ENCODE measurements at regions of chr16 and their contacts with region 1.

Region 1: GRCh38 chr16:77236063-77236511 is 36.9 kb downstream of the SYCE1L start:
- DNase-seq: peak; percentile 75
- ATAC-seq: peak; percentile 100
- H3K4me3 Mint-ChIP-seq: peak overlapping the region; percentile 50
- H3K27ac Mint-ChIP-seq: no peak overlapping the region
- H3K4me1 Mint-ChIP-seq: peaks cover 4% of the 10 kb centered on the region
- H3K27me3 Mint-ChIP-seq: peaks cover 10% of the 10 kb centered on the region
- CTCF ChIP-seq: peak; percentile 90

Region 2: GRCh38 chr16:77317059-77317458 is 81.0 kb after region 1 on chr16:
- CTCF ChIA-PET with region 1: no interaction called
- POLR2A ChIA-PET with region 1: no interaction called
- intact Hi-C with region 1: no loop called
- DNase-seq: no peak
- ATAC-seq: no peak
- H3K4me3 Mint-ChIP-seq: no peak overlapping the region
- H3K27ac Mint-ChIP-seq: no peak overlapping the region
- H3K4me1 Mint-ChIP-seq: no peaks in the 10 kb centered on the region
- H3K27me3 Mint-ChIP-seq: peaks cover 2% of the 10 kb centered on the region
- CTCF ChIP-seq: no peak

Region 3: GRCh38 chr16:77376358-77376757 is 140.3 kb after region 1 on chr16:
- CTCF ChIA-PET with region 1: no interaction called
- POLR2A ChIA-PET with region 1: no interaction called
- intact Hi-C with region 1: loop called (anchors 1 kb)
- DNase-seq: no peak
- ATAC-seq: no peak
- H3K4me3 Mint-ChIP-seq: no peak overlapping the region
- H3K27ac Mint-ChIP-seq: no peak overlapping the region
- H3K4me1 Mint-ChIP-seq: no peaks in the 10 kb centered on the region
- H3K27me3 Mint-ChIP-seq: no peaks in the 10 kb centered on the region
- CTCF ChIP-seq: no peak

Region 4: DNA sequence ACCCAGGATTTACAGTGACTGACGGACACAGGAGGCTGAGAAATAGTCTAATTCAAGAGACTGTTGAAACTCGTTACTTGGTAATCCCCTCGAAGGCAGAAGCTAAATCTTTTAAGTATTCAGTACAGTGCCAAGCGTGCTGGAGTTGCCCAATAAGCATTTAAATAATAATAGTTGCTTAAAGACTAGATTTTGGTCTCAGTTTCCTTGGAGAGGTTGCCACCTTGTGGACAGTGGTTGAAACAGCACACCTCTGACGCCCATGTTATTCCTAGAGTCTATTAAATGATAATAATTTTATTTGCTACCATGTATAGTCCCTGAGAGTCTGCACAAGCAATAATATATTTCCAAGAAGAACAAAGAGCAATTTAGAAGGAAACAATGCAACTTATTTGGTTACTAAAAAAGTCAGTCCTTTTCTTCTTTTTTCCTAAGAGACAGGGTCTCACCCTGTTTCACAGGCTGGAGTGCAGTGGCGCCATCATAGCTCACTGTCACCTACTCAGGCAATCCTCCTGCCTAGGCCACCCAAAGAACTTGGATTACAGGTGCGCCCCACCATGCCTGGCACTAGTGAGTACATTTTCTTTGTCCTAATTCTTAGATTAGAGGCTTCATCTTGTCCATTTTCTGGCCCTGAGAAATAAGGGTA is 348.2 kb after region 1 on chr16:
- CTCF ChIA-PET with region 1: interaction called, 125 read pairs
- POLR2A ChIA-PET with region 1: no interaction called
- intact Hi-C with region 1: loop called (anchors 1 kb)
- DNase-seq: no peak
- ATAC-seq: peak; percentile 42
- H3K4me3 Mint-ChIP-seq: no peak overlapping the region
- H3K27ac Mint-ChIP-seq: no peak overlapping the region
- H3K4me1 Mint-ChIP-seq: no peaks in the 10 kb centered on the region
- H3K27me3 Mint-ChIP-seq: peaks cover 9% of the 10 kb centered on the region
- CTCF ChIP-seq: peak; percentile 90

Region 5: GRCh38 chr16:77971306-77972271 is 735.5 kb after region 1 on chr16:
- CTCF ChIA-PET with region 1: no interaction called
- POLR2A ChIA-PET with region 1: no interaction called
- intact Hi-C with region 1: loop called (anchors 1 kb)
- DNase-seq: peak; percentile 52
- ATAC-seq: no peak
- H3K4me3 Mint-ChIP-seq: no peak overlapping the region
- H3K27ac Mint-ChIP-seq: no peak overlapping the region
- H3K4me1 Mint-ChIP-seq: no peaks in the 10 kb centered on the region
- H3K27me3 Mint-ChIP-seq: peaks cover 4% of the 10 kb centered on the region
- CTCF ChIP-seq: no peak